Left colon (tissue), 2 donors: ENCODE measurements at regions of chr11 and their contacts with region 1.

Region 1: DNA sequence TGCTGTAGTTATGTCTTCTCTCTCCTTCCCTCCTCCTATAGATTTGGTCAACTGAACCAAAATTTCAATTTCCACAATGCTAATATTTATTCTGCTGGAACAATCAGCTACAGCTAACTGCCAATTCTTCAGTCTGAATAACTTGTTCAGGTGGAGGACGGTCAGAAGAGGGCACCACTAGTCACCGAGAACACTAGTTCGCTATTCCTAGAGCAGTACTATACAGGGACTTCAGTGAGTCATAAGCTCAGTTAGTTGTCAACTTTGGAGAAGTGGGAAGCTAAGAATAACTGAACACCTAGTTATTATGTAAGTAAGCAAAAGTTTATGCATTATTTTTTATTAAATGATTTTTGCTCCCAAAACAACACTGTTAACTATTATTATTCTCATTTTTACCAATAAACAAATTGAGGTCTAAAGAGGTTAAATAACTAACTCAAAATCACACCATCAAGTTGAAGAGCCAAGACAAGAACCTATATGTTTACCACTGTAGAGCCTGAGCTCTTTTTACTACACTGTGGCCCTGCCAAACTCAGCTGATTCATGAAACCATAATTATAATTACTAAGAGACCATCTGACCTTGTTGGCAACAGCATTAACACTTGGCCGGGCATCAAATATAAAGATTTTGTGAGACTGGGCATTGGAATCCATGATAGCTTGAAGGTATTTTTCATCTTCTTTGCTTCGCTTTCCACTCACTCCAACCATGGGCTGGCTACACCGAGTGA is 59.0 kb downstream of the CEP57 start:
- DNase-seq: peak; percentile 35 to 52
- ATAC-seq: peak; percentile 92

Region 2: GRCh38 chr11:96357794-96358193 is 508.5 kb after region 1 on chr11:
- intact Hi-C with region 1: loop called in 1 of 2 experiments (anchors 10 kb)
- DNase-seq: no peak
- ATAC-seq: no peak

Region 3: DNA sequence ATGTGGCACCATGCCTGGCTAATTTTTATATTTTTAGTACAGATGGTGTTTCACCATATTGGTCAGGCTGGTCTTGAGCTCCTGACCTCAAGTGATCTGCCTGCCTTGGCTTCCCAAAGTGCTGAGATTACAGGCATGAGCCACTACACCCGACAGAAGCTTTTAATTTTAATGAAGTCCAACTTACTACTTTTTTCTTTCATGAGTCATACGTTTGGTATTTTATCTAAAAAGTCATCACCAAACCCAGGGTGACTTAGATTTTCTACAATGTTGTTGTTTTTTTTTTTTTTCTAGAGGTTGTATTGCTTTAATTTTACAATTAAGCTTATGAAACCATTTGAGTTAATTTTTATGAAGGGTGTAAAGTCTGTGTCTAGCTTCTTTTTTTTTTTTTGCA is 575.4 kb after region 1 on chr11:
- intact Hi-C with region 1: loop called in 1 of 2 experiments (anchors 10 kb)
- DNase-seq: no peak
- ATAC-seq: no peak